Activated T-helper 2 cell treated with anti-CD3 and anti-CD28 coated beads, Interferon-gamma antibody, Interleukin-2, Interleukin-4, amounts not matched to agents 10 μg/mL and 5 μg/mL and 100 μg/mL, durations not matched to agents 14 hours and 24 hours and 36 hours (primary cell): ENCODE measurements at regions of chr13 and their contacts with region 1.

Region 1: GRCh38 chr13:20713751-20714150 is 10.3 kb downstream of the IL17D start:
- DNase-seq: no peak
- H3K4me3 Mint-ChIP-seq: no peak overlapping the region
- H3K27ac Mint-ChIP-seq: no peak overlapping the region
- H3K4me1 Mint-ChIP-seq: peaks cover 5% of the 10 kb centered on the region
- H3K27me3 Mint-ChIP-seq: peaks cover 9% of the 10 kb centered on the region

Region 2: DNA sequence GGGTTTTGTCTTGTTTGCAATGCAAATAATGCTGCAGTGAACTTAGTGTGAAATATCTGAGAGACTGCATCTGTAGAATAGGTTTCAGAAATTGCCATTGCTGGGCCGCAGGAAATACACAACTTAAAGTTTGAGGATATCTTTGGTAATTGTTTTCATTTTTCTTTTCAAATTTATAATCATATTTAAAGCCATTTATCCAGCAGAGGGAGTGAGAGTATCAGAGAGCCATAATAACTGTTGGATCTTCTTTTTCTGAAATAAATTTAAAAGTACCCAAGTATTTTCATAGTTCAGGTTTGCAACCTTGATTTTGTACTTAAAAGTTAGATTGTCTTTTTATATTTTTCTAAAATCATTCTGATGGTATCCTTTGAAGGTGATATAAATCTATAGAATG is 655.8 kb before region 1 on chr13:
- intact Hi-C with region 1: no loop called
- DNase-seq: no peak
- H3K4me3 Mint-ChIP-seq: no peak overlapping the region
- H3K27ac Mint-ChIP-seq: no peak overlapping the region
- H3K4me1 Mint-ChIP-seq: peaks cover 2% of the 10 kb centered on the region
- H3K27me3 Mint-ChIP-seq: no peaks in the 10 kb centered on the region

Region 3: DNA sequence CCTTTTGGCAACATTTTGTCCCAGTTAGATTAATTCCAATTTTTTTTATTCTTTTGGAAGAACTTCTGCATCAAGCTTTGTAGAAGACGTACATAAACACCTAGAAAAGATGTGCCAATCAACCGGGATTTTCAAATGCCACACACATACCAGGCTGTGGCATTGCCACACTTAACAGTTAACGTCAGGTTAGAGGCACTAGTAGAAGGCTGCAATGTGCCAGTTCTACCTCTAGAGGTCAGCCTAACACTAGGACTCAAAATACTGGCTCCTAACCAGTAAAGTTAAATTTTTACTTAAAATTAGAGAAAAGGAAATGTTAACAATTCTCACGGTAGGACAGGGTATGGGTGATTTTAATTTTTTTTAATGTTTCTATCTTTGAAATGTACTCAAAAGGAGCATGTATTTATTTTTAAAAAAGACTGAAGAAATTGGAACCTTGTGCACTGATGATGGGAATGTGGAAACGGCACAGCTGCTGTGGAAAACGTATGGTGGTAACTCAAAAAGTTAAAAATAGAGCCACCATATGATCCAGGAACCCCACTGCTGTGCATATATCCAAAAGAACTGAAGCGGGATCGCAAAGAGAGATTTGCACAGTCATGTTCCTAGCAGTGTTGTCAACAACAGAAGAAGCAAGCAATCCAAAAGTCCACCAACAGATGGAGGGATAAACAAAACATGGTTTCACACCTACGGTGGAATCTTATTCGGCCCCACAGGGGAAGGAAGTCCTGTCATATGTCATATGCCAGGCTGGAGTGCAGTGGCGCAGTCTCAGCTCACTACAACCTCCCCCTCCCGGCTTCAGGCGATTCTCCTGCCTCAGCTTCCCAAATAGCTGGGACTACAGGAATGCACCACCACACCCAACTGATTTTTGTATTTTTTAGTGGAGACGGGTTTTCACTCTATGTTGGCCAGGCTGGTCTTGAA is 218.4 kb before region 1 on chr13:
- intact Hi-C with region 1: loop called (anchors 5 kb)
- DNase-seq: peak; percentile 32
- H3K4me3 Mint-ChIP-seq: no peak overlapping the region
- H3K27ac Mint-ChIP-seq: no peak overlapping the region
- H3K4me1 Mint-ChIP-seq: no peaks in the 10 kb centered on the region
- H3K27me3 Mint-ChIP-seq: no peaks in the 10 kb centered on the region

Region 4: GRCh38 chr13:20652946-20653345 is 60.8 kb before region 1 on chr13:
- intact Hi-C with region 1: no loop called
- DNase-seq: no peak
- H3K4me3 Mint-ChIP-seq: no peak overlapping the region
- H3K27ac Mint-ChIP-seq: no peak overlapping the region
- H3K4me1 Mint-ChIP-seq: no peaks in the 10 kb centered on the region
- H3K27me3 Mint-ChIP-seq: peaks cover 3% of the 10 kb centered on the region

Region 5: DNA sequence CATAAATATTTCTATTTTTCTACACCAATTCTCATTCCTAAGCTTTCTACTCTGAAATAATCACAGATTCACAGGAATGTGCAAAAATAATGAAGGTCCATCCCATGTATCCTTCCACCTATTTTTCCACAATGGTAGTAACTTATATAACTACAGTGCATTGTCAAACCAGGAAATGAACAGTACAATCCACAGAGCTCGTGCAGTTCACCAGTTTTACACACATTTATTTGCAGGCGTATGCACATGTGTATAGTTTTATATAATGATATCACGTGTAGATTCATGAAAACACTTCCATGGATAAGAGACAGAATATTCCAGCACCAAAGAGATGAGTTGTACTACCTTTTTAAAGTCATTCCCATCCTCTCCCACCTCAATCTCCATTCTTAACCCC is 47.1 kb after region 1 on chr13:
- intact Hi-C with region 1: no loop called
- DNase-seq: no peak
- H3K4me3 Mint-ChIP-seq: no peak overlapping the region
- H3K27ac Mint-ChIP-seq: no peak overlapping the region
- H3K4me1 Mint-ChIP-seq: no peaks in the 10 kb centered on the region
- H3K27me3 Mint-ChIP-seq: no peaks in the 10 kb centered on the region

Region 6: GRCh38 chr13:20773194-20774080 is 59.7 kb after region 1 on chr13 and contains the start of gene EEF1AKMT1:
- intact Hi-C with region 1: no loop called
- DNase-seq: peak; percentile 93
- H3K4me3 Mint-ChIP-seq: peak within 1 kb of the TSS; percentile 95
- H3K27ac Mint-ChIP-seq: peak within 1 kb of the TSS; percentile 99
- H3K4me1 Mint-ChIP-seq: peaks cover 23% of the 10 kb centered on the region
- H3K27me3 Mint-ChIP-seq: no peaks in the 10 kb centered on the region
- total RNA-seq, gene EEF1AKMT1: 12.2 and 12.7 TPM in 2 replicates

Region 7: DNA sequence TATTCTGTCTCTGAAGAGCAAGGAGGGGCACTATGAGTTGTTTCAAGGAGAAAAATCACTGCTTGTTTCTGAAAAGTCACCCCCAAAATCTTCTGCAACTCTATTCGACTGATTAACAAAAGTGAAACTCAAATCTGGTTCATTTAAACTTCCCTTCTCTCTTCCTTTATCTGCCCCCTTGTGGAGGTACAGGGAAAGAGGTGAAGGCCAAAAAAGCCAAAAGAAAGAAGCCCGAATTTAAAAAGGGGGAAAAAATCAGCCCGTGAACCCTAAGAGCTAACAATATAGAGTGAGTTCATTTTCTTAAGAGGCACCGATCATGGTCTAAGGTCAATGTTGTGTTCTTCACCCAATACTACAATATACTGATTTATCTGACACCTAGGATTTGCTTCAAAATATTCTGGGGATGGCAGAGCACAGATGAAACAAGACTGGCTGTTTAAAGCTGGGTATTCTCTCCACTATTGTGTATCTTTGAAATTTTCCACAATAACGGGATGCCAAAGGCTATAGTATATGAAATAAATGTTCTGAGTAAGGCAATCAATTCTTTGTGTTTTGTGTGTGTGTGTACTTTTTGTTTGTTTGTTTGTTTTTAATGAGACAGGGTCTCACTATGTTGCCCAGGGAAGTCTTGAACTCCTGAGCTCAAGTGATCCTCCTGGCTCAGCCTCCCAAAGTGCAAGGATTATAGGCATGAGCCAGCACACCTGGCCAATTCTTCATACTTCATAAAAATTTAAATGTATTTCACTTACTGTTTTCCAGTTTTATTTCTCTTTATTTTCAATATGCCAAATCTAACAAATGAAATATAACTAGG is 115.0 kb after region 1 on chr13:
- intact Hi-C with region 1: loop called (anchors 5 kb)
- DNase-seq: peak; percentile 15
- H3K4me3 Mint-ChIP-seq: no peak overlapping the region
- H3K27ac Mint-ChIP-seq: no peak overlapping the region
- H3K4me1 Mint-ChIP-seq: peaks cover 6% of the 10 kb centered on the region
- H3K27me3 Mint-ChIP-seq: no peaks in the 10 kb centered on the region

Region 8: DNA sequence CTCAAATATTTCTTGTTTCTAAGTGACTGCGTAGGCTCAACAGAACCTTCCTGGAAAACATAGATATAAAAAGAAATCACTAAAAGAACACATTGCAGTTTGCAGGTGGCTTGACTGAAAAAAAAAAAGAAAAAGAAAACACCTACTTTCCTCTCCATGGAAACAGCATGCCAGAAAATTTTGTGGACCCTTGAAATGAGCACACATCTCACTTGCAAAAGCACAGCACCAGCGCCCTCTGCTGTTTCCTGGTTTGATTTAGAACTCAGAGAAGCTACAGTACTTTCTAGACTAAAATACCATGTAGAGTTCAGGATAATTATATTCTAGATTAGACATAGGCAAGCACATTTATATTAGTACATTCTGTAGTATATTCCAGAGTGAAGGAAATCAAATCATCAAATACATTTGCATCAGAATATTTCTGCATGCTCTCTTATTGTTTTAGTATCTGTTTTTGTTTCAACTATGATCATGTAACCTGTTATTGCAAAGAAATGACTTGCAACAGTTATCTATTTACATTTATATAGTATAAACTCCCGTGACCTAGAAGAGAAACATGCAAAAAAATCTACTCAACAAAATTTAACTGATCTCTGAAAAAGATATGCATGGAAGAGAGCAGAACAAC is 211.1 kb after region 1 on chr13:
- intact Hi-C with region 1: loop called (anchors 1 kb)
- DNase-seq: peak; percentile 41
- H3K4me3 Mint-ChIP-seq: no peak overlapping the region
- H3K27ac Mint-ChIP-seq: no peak overlapping the region
- H3K4me1 Mint-ChIP-seq: no peaks in the 10 kb centered on the region
- H3K27me3 Mint-ChIP-seq: no peaks in the 10 kb centered on the region